Calu3 (cell line): ENCODE measurements at regions of chr7 and their contacts with region 1.

Region 1: GRCh38 chr7:131859147-131859821 is 302.9 kb upstream of the PODXL start:
- DNase-seq: peak; percentile 79
- H3K4me3 Mint-ChIP-seq: no peak overlapping the region
- H3K27ac Mint-ChIP-seq: no peak overlapping the region
- H3K4me1 Mint-ChIP-seq: no peaks in the 10 kb centered on the region
- H3K27me3 Mint-ChIP-seq: peaks cover 50% of the 10 kb centered on the region
- CTCF ChIP-seq: peak; percentile 67

Region 2: GRCh38 chr7:130695840-130696239 is 1163.4 kb before region 1 on chr7:
- CTCF ChIA-PET with region 1: no interaction called
- intact Hi-C with region 1: no loop called
- DNase-seq: peak; percentile 9
- H3K4me3 Mint-ChIP-seq: no peak overlapping the region
- H3K27ac Mint-ChIP-seq: no peak overlapping the region
- H3K4me1 Mint-ChIP-seq: no peaks in the 10 kb centered on the region
- H3K27me3 Mint-ChIP-seq: no peaks in the 10 kb centered on the region
- CTCF ChIP-seq: peak; percentile 48

Region 3: GRCh38 chr7:131786204-131786603 is 73.1 kb before region 1 on chr7:
- CTCF ChIA-PET with region 1: no interaction called
- intact Hi-C with region 1: no loop called
- DNase-seq: no peak
- H3K4me3 Mint-ChIP-seq: no peak overlapping the region
- H3K27ac Mint-ChIP-seq: no peak overlapping the region
- H3K4me1 Mint-ChIP-seq: no peaks in the 10 kb centered on the region
- H3K27me3 Mint-ChIP-seq: peaks cover 70% of the 10 kb centered on the region
- CTCF ChIP-seq: no peak

Region 4: GRCh38 chr7:131919920-131920709 is 60.8 kb after region 1 on chr7:
- CTCF ChIA-PET with region 1: no interaction called
- intact Hi-C with region 1: loop called (anchors 5 kb)
- DNase-seq: no peak
- H3K4me3 Mint-ChIP-seq: no peak overlapping the region
- H3K27ac Mint-ChIP-seq: no peak overlapping the region
- H3K4me1 Mint-ChIP-seq: no peaks in the 10 kb centered on the region
- H3K27me3 Mint-ChIP-seq: peaks cover 43% of the 10 kb centered on the region
- CTCF ChIP-seq: no peak

Region 5: GRCh38 chr7:132049462-132050304 is 190.4 kb after region 1 on chr7:
- CTCF ChIA-PET with region 1: interaction called, 7 read pairs
- intact Hi-C with region 1: loop called (anchors 1 kb)
- DNase-seq: peak; percentile 70
- H3K4me3 Mint-ChIP-seq: no peak overlapping the region
- H3K27ac Mint-ChIP-seq: no peak overlapping the region
- H3K4me1 Mint-ChIP-seq: no peaks in the 10 kb centered on the region
- H3K27me3 Mint-ChIP-seq: peaks cover 64% of the 10 kb centered on the region
- CTCF ChIP-seq: peak; percentile 68